Activated naive CD4-positive, alpha-beta T cell treated with anti-CD3 and anti-CD28 coated beads for 36 hours (primary cell): ENCODE measurements at regions of chrX and their contacts with region 1.

Region 1: DNA sequence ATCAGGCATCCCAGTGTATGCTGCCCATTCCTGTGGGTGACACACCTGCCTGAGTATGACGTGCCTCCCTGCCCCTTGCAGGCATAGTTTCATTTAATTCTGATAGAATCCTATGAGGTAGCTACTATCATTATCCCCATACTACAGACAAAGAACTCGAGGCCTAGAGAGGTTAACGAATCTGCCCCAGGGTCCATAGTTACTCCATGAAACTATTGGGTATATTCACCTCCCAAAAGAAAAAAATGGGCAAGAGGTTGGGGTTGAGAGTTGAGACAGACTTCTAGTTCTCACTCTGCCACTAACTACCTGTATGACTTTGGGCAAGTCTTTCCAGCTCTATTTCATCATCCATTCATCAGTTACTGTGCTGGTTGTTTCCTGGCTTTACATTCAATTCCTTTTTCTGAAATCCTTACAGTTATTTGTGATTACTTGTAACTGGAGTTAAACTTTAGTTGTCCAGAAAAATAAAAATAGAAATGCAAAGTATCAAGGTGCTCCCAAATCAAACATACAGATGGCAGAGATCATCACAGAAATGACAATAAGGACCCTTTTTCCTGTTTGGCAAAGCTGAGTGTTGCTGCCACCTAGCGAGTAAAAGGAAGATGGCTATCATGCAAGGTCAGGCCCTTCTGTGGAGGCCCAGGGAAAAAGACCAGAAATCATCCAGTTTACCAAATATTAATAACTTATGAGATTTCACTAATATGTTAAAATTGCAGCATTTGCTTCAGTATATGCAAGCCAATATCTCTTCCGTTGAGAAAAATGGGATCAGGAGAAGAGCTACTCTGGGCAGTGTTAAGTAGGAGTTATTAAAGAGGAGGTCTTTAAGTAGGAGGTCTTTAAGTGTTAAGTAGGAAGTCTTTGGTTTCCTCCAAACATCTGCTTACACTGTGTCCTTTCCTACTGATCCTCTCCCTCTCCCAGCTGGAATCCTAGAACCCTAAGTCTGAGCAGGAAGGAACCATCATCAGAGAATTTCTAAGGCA is 17.1 kb upstream of the MAP7D3 start:
- DNase-seq: peak; percentile 70
- H3K4me3 Mint-ChIP-seq: no peak overlapping the region
- H3K27ac Mint-ChIP-seq: no peak overlapping the region
- H3K4me1 Mint-ChIP-seq: peaks cover 1% of the 10 kb centered on the region
- H3K27me3 Mint-ChIP-seq: no peaks in the 10 kb centered on the region

Region 2: GRCh38 chrX:135931644-135932487 is 336.5 kb before region 1 on chrX:
- CTCF ChIA-PET with region 1: no interaction called
- intact Hi-C with region 1: loop called (anchors 2 kb)
- DNase-seq: peak; percentile 57
- H3K4me3 Mint-ChIP-seq: no peak overlapping the region
- H3K27ac Mint-ChIP-seq: no peak overlapping the region
- H3K4me1 Mint-ChIP-seq: no peaks in the 10 kb centered on the region
- H3K27me3 Mint-ChIP-seq: no peaks in the 10 kb centered on the region

Region 3: GRCh38 chrX:136028251-136028984 is 239.9 kb before region 1 on chrX:
- CTCF ChIA-PET with region 1: interaction called, 32 read pairs
- intact Hi-C with region 1: loop called (anchors 1 kb)
- DNase-seq: no peak
- H3K4me3 Mint-ChIP-seq: no peak overlapping the region
- H3K27ac Mint-ChIP-seq: no peak overlapping the region
- H3K4me1 Mint-ChIP-seq: no peaks in the 10 kb centered on the region
- H3K27me3 Mint-ChIP-seq: no peaks in the 10 kb centered on the region

Region 4: GRCh38 chrX:136162831-136163570 is 105.3 kb before region 1 on chrX:
- CTCF ChIA-PET with region 1: interaction called, 4 read pairs
- intact Hi-C with region 1: loop called (anchors 1 kb)
- DNase-seq: peak; percentile 72
- H3K4me3 Mint-ChIP-seq: no peak overlapping the region
- H3K27ac Mint-ChIP-seq: no peak overlapping the region
- H3K4me1 Mint-ChIP-seq: peaks cover 3% of the 10 kb centered on the region
- H3K27me3 Mint-ChIP-seq: no peaks in the 10 kb centered on the region

Region 5: GRCh38 chrX:136200466-136200865 is 67.9 kb before region 1 on chrX:
- CTCF ChIA-PET with region 1: no interaction called
- intact Hi-C with region 1: loop called (anchors 5 kb)
- DNase-seq: peak; percentile 18
- H3K4me3 Mint-ChIP-seq: no peak overlapping the region
- H3K27ac Mint-ChIP-seq: no peak overlapping the region
- H3K4me1 Mint-ChIP-seq: peaks cover 27% of the 10 kb centered on the region
- H3K27me3 Mint-ChIP-seq: no peaks in the 10 kb centered on the region

Region 6: DNA sequence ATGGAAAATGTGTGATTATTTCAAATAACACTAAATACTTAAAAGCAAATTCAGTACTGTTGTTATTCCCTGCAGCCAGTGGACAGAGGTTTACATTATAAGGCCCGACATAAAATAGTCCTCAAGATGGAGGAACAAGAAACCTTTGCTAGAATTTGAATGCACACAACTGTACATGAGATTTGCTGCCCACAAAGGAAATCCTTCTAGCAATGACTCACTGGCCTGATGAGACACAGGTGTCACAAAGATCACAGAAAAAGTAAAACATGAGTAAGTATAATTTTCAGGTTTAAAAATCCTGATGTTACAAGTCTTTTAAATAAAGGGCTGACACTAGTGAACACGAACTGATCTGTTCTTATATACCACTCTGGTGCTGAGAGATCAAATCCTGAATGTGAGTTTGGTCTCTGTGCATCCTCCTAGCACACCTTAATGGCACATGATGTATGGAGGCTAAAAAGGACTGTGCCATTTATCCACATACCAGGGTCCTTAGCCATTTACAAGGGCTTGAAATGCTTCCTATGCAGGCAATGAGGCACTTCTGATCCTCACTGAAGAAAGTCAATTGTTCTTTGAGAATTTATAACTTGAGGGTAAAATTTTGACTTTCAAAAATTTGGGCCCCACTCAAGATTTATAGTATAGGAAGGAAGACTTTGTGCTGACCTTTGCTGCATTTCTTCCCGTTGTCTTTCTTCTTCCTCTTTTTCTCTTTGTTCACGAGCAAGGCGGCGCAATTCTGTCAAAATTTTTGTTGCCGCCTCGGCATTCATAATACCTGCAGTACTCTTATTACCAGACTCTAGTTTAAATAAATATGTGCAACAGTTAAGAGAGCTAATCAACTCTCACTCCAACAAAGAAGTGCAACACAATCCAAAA is 40.2 kb before region 1 on chrX:
- CTCF ChIA-PET with region 1: no interaction called
- intact Hi-C with region 1: loop called (anchors 2 kb)
- DNase-seq: peak; percentile 22
- H3K4me3 Mint-ChIP-seq: no peak overlapping the region
- H3K27ac Mint-ChIP-seq: no peak overlapping the region
- H3K4me1 Mint-ChIP-seq: peaks cover 17% of the 10 kb centered on the region
- H3K27me3 Mint-ChIP-seq: no peaks in the 10 kb centered on the region

Region 7: DNA sequence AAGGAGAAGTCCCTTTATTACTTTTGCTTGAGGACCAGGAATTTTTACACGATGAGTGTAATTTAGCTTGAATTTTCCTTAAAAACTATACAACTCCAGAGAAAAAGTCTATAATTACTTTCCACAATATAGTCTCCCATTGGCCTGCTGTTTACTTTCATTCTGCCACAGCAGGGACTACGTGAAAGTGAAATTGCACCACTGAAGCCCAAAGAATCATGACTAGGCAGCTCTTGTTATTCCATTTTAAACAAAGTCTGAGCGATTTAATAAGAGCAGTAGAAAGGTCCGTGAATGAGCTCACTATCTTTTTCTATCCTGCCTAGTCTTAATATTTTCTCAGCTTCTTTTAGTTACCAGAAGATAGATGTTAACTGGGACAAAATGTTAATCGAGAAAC is 101.0 kb after region 1 on chrX:
- CTCF ChIA-PET with region 1: no interaction called
- intact Hi-C with region 1: no loop called
- DNase-seq: no peak
- H3K4me3 Mint-ChIP-seq: no peak overlapping the region
- H3K27ac Mint-ChIP-seq: no peak overlapping the region
- H3K4me1 Mint-ChIP-seq: peaks cover 2% of the 10 kb centered on the region
- H3K27me3 Mint-ChIP-seq: peaks cover 2% of the 10 kb centered on the region